Endothelial cell of umbilical vein (primary cell): ENCODE measurements at regions of chr9 and their contacts with region 1.

Region 1: DNA sequence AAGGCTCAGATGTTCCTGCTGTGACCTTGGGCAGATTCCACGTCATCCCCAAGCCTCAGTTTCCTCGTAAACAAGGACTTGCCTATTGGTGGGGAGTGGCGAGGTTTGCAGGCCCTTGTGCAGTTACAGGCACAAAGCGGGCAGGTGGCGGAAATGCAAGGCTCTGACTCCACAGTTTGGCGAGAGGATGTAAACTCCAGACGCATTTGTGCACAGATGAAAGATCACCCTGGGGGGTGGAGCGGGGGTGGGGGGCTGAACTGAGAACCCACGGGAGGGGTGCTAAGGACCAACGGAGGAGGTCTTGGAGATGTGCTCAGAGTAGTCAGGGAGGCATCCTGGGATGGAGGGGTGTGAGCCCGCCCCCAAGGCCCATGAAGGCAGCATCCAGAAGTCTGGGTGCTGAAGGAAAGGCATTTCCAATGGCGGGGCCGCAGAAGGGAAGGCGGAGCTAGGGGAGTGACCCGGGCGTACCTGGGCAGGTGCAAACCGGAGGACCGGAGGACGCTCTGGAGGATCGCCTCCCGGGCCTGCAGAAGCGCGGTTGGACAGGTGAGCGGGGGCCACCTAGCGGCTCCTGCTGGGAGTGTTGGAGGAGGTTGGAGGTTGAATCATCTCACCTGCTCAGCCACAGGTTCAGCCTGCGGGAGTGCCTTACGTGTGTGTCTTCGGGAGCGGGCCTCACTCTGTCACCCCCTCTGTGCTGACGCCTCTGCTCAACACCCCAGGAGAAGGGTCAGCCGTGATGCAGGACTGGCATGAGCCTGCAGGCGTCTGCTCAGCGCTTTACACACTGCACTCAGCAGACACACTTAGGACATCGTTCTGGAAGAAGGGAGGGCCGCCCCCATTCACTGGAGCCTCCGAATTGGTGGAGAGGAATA is 1.9 kb upstream of the FIBCD1 start:
- DNase-seq: peak; percentile 44
- H3K4me3 ChIP-seq: no peak overlapping the region
- H3K27ac ChIP-seq: no peak overlapping the region
- H3K4me1 ChIP-seq: peaks cover 3% of the 10 kb centered on the region
- H3K27me3 ChIP-seq: peaks cover 21 to 35% of the 10 kb centered on the region in 2 experiments
- CTCF ChIP-seq: peak; percentile 64 to 89
- POLR2A ChIP-seq: no peak

Region 2: GRCh38 chr9:130707225-130707976 is 233.5 kb before region 1 on chr9:
- CTCF ChIA-PET with region 1: interaction called, 4 read pairs
- POLR2A ChIA-PET with region 1: no interaction called
- dilution Hi-C with region 1: no loop called
- intact Hi-C with region 1: loop called (anchors 1 kb)
- DNase-seq: peak; percentile 65
- H3K4me3 ChIP-seq: no peak overlapping the region
- H3K27ac ChIP-seq: no peak overlapping the region
- H3K4me1 ChIP-seq: no peaks in the 10 kb centered on the region
- H3K27me3 ChIP-seq: no peaks in the 10 kb centered on the region
- CTCF ChIP-seq: peak; percentile 36 to 66
- POLR2A ChIP-seq: no peak

Region 3: GRCh38 chr9:130893341-130894101 is 47.4 kb before region 1 on chr9:
- CTCF ChIA-PET with region 1: interaction called, 4 read pairs
- POLR2A ChIA-PET with region 1: no interaction called
- dilution Hi-C with region 1: no loop called
- intact Hi-C with region 1: loop called (anchors 2 kb)
- DNase-seq: no peak
- H3K4me3 ChIP-seq: no peak overlapping the region
- H3K27ac ChIP-seq: no peak overlapping the region
- H3K4me1 ChIP-seq: no peaks in the 10 kb centered on the region
- H3K27me3 ChIP-seq: no peaks in the 10 kb centered on the region
- CTCF ChIP-seq: peak in 1 of 2 donors; percentile 16
- POLR2A ChIP-seq: no peak

Region 4: GRCh38 chr9:130962418-130963316 is 21.7 kb after region 1 on chr9:
- CTCF ChIA-PET with region 1: interaction called, 3 read pairs
- POLR2A ChIA-PET with region 1: no interaction called
- dilution Hi-C with region 1: no loop called
- intact Hi-C with region 1: loop called (anchors 1 kb)
- DNase-seq: peak; percentile 95
- H3K4me3 ChIP-seq: no peak overlapping the region
- H3K27ac ChIP-seq: peak overlapping the region; percentile 50
- H3K4me1 ChIP-seq: peaks cover 12% of the 10 kb centered on the region
- H3K27me3 ChIP-seq: no peaks in the 10 kb centered on the region
- CTCF ChIP-seq: no peak
- POLR2A ChIP-seq: no peak